Cardiac septum (tissue), 1 donor: ENCODE measurements at regions of chr10 and their contacts with region 1.

Region 1: DNA sequence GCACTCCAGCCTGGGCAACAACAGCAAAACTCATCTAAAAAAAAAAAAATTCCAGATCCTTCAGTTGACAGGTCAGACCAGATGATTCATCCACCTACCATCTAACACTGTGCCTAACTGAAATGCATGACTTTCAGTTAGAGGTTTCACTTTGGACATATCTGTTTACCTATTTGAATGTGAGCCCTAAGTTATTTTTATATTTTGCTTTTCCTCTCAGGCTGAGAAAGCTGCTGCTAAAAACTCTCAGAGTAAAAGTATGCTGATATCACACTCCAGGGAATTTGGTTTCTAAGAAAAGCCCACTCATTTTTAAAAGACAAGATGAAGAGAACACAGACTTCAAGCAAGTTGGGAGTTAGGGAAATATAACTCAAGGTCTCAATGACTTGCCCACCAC is 126.0 kb downstream of the SGMS1 start:
- DNase-seq: no peak

Region 2: DNA sequence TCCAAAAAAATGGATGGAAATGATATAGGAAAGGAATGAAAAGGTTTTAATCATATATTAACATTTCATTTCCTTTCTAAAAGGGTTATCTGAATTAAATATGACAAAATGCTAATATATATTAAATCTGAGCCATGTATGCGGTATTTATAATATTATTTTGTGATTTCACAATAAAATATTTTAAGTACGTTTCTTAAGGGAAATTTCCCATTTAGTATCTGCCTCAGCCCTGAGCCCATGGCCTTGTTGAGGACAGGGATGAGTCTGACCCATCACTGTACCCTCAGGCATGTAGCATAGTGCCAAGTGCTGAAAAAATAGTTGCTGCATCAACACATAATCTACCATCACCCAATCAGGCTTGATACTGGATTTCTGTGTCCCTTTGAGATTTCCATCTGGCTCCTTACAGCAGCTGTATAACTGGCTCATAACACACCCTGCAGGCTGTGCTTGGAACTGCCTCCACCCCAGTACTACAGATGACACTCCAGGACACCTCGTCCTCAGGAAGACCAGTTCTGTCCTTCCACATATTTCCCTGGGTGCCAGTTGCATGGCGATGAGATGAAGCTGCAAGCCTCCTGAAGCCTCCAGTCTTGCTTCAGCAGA is 187.1 kb before region 1 on chr10:
- intact Hi-C with region 1: loop called (anchors 10 kb)
- DNase-seq: no peak